AG04450 (cell line): ENCODE measurements at regions of chr1 and their contacts with region 1.

Region 1: DNA sequence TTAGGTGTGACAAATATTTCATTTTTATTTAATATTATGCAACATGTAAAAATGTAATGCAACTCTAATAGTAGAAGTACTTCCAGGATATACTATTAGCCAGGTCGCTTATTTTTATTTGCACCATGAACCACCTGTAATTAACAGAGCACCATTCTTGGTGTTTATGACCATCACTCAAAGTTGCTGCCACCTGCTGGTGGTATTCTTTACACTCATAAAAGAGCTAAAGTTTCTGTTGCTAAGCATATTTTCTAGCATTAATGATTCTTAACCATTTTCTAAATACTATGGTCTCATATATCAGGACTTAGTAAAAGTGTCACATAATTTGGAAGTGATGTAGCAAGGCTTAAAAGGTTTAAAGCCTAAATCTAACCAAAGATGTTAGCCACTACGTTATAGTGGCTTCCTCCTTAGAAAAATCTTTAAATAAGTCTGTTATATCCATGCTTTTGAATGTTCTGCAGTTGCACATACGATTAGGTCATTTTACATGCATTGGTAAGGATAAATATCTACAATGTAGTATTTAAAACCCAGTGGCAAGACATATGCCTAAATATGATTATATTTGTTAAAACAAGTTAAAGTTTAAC is 244.5 kb downstream of the NEGR1 start:
- DNase-seq: peak; percentile 3
- H3K4me3 ChIP-seq: no peak overlapping the region
- H3K27ac ChIP-seq: no peak overlapping the region
- H3K27me3 ChIP-seq: no peaks in the 10 kb centered on the region
- CTCF ChIP-seq: peak; percentile 69

Region 2: GRCh38 chr1:71196685-71197084 is 841.2 kb before region 1 on chr1:
- CTCF ChIA-PET with region 1: interaction called, 20 read pairs
- POLR2A ChIA-PET with region 1: no interaction called
- DNase-seq: peak; percentile 2
- H3K4me3 ChIP-seq: no peak overlapping the region
- H3K27ac ChIP-seq: no peak overlapping the region
- H3K27me3 ChIP-seq: no peaks in the 10 kb centered on the region
- CTCF ChIP-seq: peak; percentile 56

Region 3: GRCh38 chr1:71640116-71640515 is 397.7 kb before region 1 on chr1:
- CTCF ChIA-PET with region 1: interaction called, 16 read pairs
- POLR2A ChIA-PET with region 1: no interaction called
- DNase-seq: no peak
- H3K4me3 ChIP-seq: no peak overlapping the region
- H3K27ac ChIP-seq: no peak overlapping the region
- H3K27me3 ChIP-seq: no peaks in the 10 kb centered on the region
- CTCF ChIP-seq: no peak

Region 4: DNA sequence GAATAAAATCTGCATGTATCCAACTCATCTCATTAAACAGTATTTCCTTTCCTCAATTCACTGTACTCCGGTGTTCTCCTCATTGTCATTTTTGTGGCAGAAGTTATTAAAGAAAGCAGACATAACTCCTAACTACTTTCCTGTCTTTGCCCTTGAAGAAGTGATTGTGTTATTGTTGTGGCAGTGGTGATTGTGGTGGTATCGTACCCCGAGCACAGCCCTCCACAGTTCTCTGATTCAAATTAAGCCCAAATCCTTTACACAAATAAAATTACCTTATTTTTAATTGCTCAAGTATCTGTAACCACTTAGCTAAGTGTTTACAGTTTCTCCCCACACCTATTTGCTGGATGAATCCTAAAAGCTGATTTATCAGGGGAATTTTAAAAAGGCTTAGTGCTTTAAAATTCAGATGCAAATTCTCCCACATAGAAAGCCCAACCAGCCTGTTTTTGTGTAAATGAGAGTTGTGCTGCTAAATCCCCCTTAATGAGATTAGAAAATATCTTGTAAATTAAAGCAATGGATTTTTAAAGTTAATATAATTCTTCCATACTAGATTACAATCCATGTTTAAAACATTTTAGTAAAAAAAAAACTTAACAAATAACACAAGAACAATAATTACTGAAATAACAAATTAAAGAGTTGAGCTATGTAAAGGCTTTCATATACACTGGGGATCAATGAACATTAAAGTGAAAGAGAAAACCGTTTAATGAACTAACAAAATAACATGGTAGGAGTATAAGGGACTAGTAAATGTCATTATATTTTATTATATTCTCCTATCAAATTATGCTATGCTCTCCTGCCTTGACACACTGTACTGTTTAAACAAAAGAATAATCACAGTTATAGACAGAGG is 14.5 kb before region 1 on chr1:
- CTCF ChIA-PET with region 1: interaction called, 57 read pairs
- POLR2A ChIA-PET with region 1: no interaction called
- DNase-seq: no peak
- H3K4me3 ChIP-seq: no peak overlapping the region
- H3K27ac ChIP-seq: no peak overlapping the region
- H3K27me3 ChIP-seq: no peaks in the 10 kb centered on the region
- CTCF ChIP-seq: no peak

Region 5: DNA sequence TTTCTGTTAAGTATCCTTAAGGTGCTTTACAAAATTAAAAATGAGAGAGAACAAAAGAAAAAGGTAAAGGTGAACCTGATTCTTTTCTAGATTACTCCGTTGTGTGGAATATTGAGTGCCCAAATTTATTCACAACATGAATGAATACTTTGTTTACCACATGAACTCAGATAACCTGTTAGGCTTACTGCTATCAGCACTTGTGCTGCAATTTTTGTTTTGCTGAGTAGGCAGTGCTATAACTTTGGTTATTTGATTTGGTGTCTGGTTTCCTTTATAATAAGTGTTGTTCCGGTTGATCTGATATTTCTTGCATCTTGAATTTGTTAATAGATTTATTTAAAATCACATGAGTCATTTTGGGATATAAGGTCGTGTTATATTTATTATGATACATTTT is 48.5 kb after region 1 on chr1:
- CTCF ChIA-PET with region 1: no interaction called
- POLR2A ChIA-PET with region 1: no interaction called
- DNase-seq: no peak
- H3K4me3 ChIP-seq: no peak overlapping the region
- H3K27ac ChIP-seq: no peak overlapping the region
- H3K27me3 ChIP-seq: no peaks in the 10 kb centered on the region
- CTCF ChIP-seq: no peak

Region 6: DNA sequence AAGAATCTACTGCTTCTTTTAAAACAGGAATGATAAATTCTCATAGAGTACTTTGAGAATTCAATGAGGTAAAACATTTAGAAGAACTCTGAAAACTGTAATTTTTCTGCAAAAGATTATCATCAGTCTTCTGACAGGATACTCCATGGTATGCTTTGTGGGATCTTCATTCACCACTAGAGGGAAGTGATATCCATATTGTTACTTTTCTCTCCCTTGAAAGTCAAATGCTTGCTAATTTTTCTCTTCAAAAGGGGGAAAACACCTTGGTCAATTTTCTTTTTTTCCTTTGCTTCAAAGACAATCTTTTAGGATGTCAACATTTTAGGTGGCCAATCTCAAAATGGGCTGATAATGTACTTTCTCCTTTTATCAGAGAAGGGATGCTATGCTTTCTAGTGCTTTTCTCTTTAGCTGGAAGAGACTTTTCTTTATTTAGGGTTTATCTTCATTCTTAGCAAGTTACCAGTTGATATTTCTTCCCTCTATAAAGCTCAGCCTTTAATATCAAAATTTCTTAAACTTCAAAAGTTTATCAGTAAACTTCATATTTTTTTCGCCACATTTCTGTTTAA is 149.0 kb after region 1 on chr1:
- CTCF ChIA-PET with region 1: interaction called, 10 read pairs
- POLR2A ChIA-PET with region 1: no interaction called
- DNase-seq: no peak
- H3K4me3 ChIP-seq: no peak overlapping the region
- H3K27ac ChIP-seq: no peak overlapping the region
- H3K27me3 ChIP-seq: no peaks in the 10 kb centered on the region
- CTCF ChIP-seq: peak; percentile 85